ENCODE measurements at regions of chr5 and their contacts with region 1.

Region 1: DNA sequence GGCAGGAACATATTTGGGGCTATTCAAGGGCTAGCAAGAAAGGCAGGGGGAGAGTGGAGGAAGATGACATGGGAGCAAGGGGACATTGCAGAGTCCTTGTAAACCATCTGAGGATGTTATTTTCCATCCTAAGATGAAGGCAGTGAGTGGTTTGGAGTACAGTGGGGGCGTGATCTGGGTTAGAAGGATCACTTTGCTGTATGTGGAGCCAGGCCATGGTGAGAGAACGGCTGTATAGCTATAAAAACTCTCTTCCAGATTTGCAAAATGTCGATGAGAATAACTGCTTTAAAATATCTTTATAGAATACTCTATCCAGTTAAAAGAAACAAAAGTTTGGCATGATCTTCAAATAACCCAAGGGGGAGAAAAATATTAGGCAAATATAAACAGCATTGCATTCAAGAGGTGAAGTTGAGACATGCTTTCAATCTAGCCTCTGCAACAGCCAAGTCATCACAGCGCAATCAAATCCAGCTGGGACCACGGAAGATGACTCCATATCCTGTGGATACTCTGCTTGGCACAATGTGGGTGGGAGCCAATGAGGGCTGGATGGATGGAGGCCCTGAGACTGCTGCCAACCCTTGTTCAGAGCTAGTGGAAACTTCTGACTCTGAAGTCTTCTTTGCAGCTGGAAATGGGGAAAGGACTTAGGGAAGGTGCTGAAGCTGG is 111.5 kb upstream of the BASP1 start:
- DNase-seq: no peak

Region 2: DNA sequence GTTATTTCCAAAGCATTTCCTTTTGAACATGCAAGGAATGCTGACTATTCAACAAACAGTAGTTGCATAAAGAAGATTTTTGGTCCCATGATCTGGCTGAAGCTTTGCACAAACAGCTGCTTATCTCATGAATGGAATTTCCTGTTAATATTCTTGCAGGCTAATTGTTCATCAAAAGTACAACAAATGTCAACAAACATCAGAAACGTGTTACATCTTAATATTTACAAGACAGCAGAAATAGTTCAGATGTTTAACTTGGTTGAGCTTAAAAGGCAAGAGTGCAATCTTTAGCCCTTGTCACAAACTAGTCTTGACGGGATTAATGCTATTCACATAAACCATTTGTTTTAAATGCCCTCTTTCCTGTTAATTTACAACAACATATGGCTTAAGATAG is 63.6 kb after region 1 on chr5:
- intact Hi-C with region 1: no loop called
- DNase-seq: no peak

Region 3: GRCh38 chr5:18354828-18355227 is 1248.9 kb after region 1 on chr5:
- intact Hi-C with region 1: loop called in 1 of 2 experiments (anchors 5 kb)
- DNase-seq: no peak